Right lobe of liver (tissue), 6 donors: ENCODE measurements at regions of chr9 and their contacts with region 1.

Region 1: GRCh38 chr9:28086881-28087280 is 513.6 kb upstream of the C9orf72 start:
- DNase-seq: no peak
- ATAC-seq: no peak
- H3K4me3 ChIP-seq: no peak overlapping the region
- H3K27ac ChIP-seq: no peak overlapping the region
- H3K4me1 ChIP-seq: no peaks in the 10 kb centered on the region
- H3K27me3 ChIP-seq: no peaks in the 10 kb centered on the region
- CTCF ChIP-seq: no peak
- POLR2A ChIP-seq: no peak

Region 2: GRCh38 chr9:27967210-27967609 is 119.7 kb before region 1 on chr9:
- intact Hi-C with region 1: no loop called
- DNase-seq: no peak
- ATAC-seq: no peak
- H3K4me3 ChIP-seq: no peak overlapping the region
- H3K27ac ChIP-seq: no peak overlapping the region
- H3K4me1 ChIP-seq: no peaks in the 10 kb centered on the region
- H3K27me3 ChIP-seq: no peaks in the 10 kb centered on the region
- CTCF ChIP-seq: no peak
- POLR2A ChIP-seq: no peak

Region 3: DNA sequence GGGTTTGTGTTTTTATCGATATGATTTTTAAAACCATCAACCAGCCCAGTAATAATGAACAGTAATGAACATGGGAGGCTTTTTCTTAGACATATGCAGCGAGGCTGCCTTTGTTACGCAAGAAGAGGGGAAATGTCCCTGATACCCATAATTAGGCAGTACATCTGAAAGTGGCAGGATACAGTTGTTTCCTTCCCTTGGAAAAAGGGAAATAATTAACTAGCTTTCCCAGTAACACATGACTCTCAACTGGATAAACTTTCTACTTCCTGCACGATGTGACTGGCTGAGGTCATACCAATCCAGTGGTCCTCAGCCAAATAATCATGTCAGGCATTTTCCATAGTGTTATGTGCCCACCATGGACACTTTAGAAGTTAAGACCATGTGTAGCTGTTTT is 82.0 kb before region 1 on chr9:
- intact Hi-C with region 1: no loop called
- DNase-seq: no peak
- ATAC-seq: peak; percentile 48 to 81 (median 66)
- H3K4me3 ChIP-seq: no peak overlapping the region
- H3K27ac ChIP-seq: no peak overlapping the region
- H3K4me1 ChIP-seq: no peaks in the 10 kb centered on the region
- H3K27me3 ChIP-seq: no peaks in the 10 kb centered on the region
- CTCF ChIP-seq: no peak
- POLR2A ChIP-seq: no peak

Region 4: DNA sequence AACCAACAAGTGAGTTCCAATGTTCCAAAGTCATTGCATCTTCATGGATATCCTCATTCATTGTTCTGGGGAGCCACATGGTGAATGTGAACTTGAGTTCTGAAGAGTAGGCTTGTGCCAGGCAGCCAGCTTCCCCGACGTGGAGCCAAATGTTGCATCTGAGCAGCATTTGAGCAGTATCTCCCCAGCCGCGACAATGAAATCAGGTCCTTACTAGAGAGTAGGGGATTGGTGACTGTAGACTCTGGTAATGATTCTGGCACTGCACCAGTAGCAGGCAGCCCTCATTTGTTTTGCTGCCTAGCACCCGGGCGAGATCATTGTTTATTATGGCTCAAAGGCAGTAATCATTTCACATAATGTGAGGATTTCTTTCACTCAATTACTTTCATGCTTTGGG is 62.2 kb before region 1 on chr9:
- intact Hi-C with region 1: loop called in 1 of 2 experiments (anchors 10 kb)
- DNase-seq: no peak
- ATAC-seq: no peak
- H3K4me3 ChIP-seq: no peak overlapping the region
- H3K27ac ChIP-seq: no peak overlapping the region
- H3K4me1 ChIP-seq: no peaks in the 10 kb centered on the region
- H3K27me3 ChIP-seq: no peaks in the 10 kb centered on the region
- CTCF ChIP-seq: no peak
- POLR2A ChIP-seq: no peak